ENCODE measurements at regions of chr6 and their contacts with region 1.

Region 1: DNA sequence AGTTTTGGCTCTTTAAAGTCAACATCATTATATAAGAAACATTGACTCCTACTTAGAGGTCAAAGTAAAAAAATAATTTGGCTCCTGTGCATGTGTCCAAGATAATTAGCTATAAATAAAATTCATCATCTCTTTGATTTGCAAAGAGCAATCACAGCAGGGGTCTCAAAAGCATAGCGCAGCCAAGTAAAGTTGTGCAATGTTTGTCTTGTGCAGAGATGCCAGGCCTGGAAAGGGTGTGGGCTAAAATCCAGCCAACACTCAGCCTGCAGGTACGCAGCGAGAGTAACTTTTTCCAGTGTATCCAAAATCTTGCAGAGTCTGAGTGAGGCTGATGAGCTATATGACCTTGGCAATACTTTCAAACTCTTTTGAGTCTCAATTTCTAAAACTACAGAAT is 501.0 kb downstream of the MMUT start:
- DNase-seq: peak; percentile 91
- H3K4me3 Mint-ChIP-seq: no peak overlapping the region
- H3K27ac Mint-ChIP-seq: no peak overlapping the region
- H3K4me1 Mint-ChIP-seq: no peaks in the 10 kb centered on the region
- H3K27me3 Mint-ChIP-seq: no peaks in the 10 kb centered on the region
- CTCF ChIP-seq: no peak

Region 2: GRCh38 chr6:48747069-48747870 is 214.8 kb before region 1 on chr6:
- CTCF ChIA-PET with region 1: no interaction called
- POLR2A ChIA-PET with region 1: no interaction called
- intact Hi-C with region 1: no loop called
- DNase-seq: peak; percentile 72
- H3K4me3 Mint-ChIP-seq: no peak overlapping the region
- H3K27ac Mint-ChIP-seq: no peak overlapping the region
- H3K4me1 Mint-ChIP-seq: peaks cover 18% of the 10 kb centered on the region
- H3K27me3 Mint-ChIP-seq: no peaks in the 10 kb centered on the region
- CTCF ChIP-seq: no peak

Region 3: GRCh38 chr6:48904809-48905208 is 57.2 kb before region 1 on chr6:
- CTCF ChIA-PET with region 1: no interaction called
- POLR2A ChIA-PET with region 1: no interaction called
- intact Hi-C with region 1: no loop called
- DNase-seq: no peak
- H3K4me3 Mint-ChIP-seq: no peak overlapping the region
- H3K27ac Mint-ChIP-seq: no peak overlapping the region
- H3K4me1 Mint-ChIP-seq: no peaks in the 10 kb centered on the region
- H3K27me3 Mint-ChIP-seq: no peaks in the 10 kb centered on the region
- CTCF ChIP-seq: no peak

Region 4: DNA sequence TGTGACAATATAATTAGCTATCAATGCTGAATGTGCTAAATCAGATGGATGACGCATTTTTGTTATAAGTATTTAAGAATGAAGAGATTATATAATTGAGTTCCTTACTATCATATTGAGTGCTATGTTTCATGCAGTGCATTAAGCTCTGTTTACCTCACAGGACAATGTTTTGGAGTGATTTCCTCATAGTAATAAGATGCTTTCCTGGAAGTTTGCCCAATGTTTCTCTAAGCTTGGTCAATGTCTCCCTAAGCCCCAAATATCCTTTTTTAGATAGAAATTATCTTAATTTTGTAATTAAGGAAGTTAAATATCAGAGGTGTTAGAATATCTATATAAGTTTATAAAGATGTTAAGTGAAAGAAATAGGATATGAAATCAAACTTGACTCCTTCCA is 11.4 kb after region 1 on chr6:
- CTCF ChIA-PET with region 1: interaction called, 5 read pairs
- POLR2A ChIA-PET with region 1: interaction called, 4 read pairs
- intact Hi-C with region 1: loop called (anchors 1 kb)
- DNase-seq: peak; percentile 49
- H3K4me3 Mint-ChIP-seq: no peak overlapping the region
- H3K27ac Mint-ChIP-seq: no peak overlapping the region
- H3K4me1 Mint-ChIP-seq: no peaks in the 10 kb centered on the region
- H3K27me3 Mint-ChIP-seq: no peaks in the 10 kb centered on the region
- CTCF ChIP-seq: no peak

Region 5: DNA sequence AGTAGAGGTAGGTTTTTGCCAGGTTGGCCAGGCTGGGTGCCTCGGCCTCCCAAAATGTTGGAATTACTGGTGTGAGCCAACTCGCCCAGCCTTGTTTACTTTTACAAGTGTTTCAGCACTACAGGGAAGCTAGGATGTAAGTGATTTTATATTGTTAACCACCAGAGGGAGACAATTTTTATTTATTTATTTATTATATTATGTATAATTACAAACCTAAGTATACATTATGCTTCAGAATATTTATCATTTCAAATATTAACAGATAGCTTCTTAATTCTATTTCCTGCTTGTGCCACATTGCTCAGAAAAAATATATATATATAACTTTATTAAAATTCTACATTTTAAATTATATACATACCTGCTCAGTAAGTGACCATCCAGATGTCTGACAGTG is 491.2 kb after region 1 on chr6:
- CTCF ChIA-PET with region 1: no interaction called
- POLR2A ChIA-PET with region 1: no interaction called
- intact Hi-C with region 1: no loop called
- DNase-seq: peak; percentile 12
- H3K4me3 Mint-ChIP-seq: no peak overlapping the region
- H3K27ac Mint-ChIP-seq: no peak overlapping the region
- H3K4me1 Mint-ChIP-seq: no peaks in the 10 kb centered on the region
- H3K27me3 Mint-ChIP-seq: no peaks in the 10 kb centered on the region
- CTCF ChIP-seq: peak; percentile 33

Measured in MCF 10A (cell line).